Activated naive CD4-positive, alpha-beta T cell treated with anti-CD3 and anti-CD28 coated beads for 36 hours (primary cell): ENCODE measurements at regions of chr1 and their contacts with region 1.

Region 1: GRCh38 chr1:159891275-159892157 is 8.4 kb downstream of the CFAP45 start:
- DNase-seq: peak; percentile 87
- H3K4me3 Mint-ChIP-seq: no peak overlapping the region
- H3K27ac Mint-ChIP-seq: no peak overlapping the region
- H3K4me1 Mint-ChIP-seq: peaks cover 6% of the 10 kb centered on the region
- H3K27me3 Mint-ChIP-seq: no peaks in the 10 kb centered on the region

Region 2: GRCh38 chr1:159161001-159161718 is 730.4 kb before region 1 on chr1:
- CTCF ChIA-PET with region 1: no interaction called
- intact Hi-C with region 1: loop called (anchors 1 kb)
- DNase-seq: peak; percentile 80
- H3K4me3 Mint-ChIP-seq: no peak overlapping the region
- H3K27ac Mint-ChIP-seq: no peak overlapping the region
- H3K4me1 Mint-ChIP-seq: no peaks in the 10 kb centered on the region
- H3K27me3 Mint-ChIP-seq: peaks cover 43% of the 10 kb centered on the region

Region 3: DNA sequence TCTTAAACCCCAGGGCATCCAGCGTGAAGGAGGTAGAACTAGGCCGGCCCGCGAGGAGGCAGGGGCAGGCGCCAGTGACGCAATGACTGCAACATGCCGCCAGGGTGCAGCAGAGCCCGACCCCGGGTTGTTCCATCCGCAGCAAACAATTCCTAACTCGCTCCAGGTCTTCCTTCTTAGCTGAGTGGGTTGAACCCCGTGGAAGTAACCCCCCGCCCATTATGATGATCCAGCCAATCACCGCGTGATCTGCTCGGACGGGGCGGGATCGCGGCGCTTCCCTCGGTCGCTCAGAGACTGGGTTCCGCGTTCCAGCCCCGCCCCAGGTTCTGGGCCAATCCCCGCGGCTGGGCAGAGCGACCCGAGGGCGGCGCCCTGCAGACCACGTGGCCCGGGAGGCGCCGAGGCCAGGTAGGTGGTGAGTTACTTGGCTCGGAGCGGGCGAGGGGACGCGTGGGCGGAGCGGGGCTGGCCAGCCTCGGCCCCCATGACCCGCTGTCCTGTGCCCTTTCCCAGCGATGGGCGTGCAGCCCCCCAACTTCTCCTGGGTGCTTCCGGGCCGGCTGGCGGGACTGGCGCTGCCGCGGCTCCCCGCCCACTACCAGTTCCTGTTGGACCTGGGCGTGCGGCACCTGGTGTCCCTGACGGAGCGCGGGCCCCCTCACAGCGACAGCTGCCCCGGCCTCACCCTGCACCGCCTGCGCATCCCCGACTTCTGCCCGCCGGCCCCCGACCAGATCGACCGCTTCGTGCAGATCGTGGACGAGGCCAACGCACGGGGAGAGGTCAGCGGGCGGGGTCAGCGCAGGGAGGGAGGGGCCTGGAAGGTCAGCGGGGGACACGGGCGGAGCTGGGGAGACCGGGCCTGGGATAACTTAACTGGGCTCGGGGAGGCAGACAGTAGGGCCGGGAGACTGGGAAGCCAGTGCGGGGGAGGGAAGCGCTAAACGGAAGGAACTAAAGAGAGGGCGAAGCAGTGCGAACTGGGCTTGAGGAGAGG is 110.6 kb before region 1 on chr1 and contains the start of gene DUSP23:
- CTCF ChIA-PET with region 1: interaction called, 27 read pairs
- intact Hi-C with region 1: loop called (anchors 1 kb)
- DNase-seq: peak; percentile 96
- H3K4me3 Mint-ChIP-seq: peak within 1 kb of the TSS; percentile 73
- H3K27ac Mint-ChIP-seq: no peak within 1 kb of the TSS
- H3K4me1 Mint-ChIP-seq: peaks cover 7% of the 10 kb centered on the region
- H3K27me3 Mint-ChIP-seq: no peaks in the 10 kb centered on the region
- total RNA-seq, gene DUSP23: 13.0 to 14.1 TPM

Region 4: GRCh38 chr1:159798893-159799292 is 92.6 kb before region 1 on chr1:
- CTCF ChIA-PET with region 1: interaction called, 303 read pairs
- intact Hi-C with region 1: loop called (anchors 1 kb)
- DNase-seq: peak; percentile 71
- H3K4me3 Mint-ChIP-seq: no peak overlapping the region
- H3K27ac Mint-ChIP-seq: no peak overlapping the region
- H3K4me1 Mint-ChIP-seq: peaks cover 13% of the 10 kb centered on the region
- H3K27me3 Mint-ChIP-seq: no peaks in the 10 kb centered on the region

Region 5: GRCh38 chr1:159924981-159925712 is 33.6 kb after region 1 on chr1 and contains the start of gene TAGLN2:
- CTCF ChIA-PET with region 1: interaction called, 15 read pairs
- intact Hi-C with region 1: loop called (anchors 2 kb)
- DNase-seq: peak; percentile 89
- H3K4me3 Mint-ChIP-seq: peak within 1 kb of the TSS; percentile 91
- H3K27ac Mint-ChIP-seq: peak within 1 kb of the TSS; percentile 93
- H3K4me1 Mint-ChIP-seq: peaks cover 42% of the 10 kb centered on the region
- H3K27me3 Mint-ChIP-seq: no peaks in the 10 kb centered on the region
- total RNA-seq, gene TAGLN2: 453 to 454 TPM

Region 6: GRCh38 chr1:160244209-160244608 is 352.7 kb after region 1 on chr1:
- CTCF ChIA-PET with region 1: no interaction called
- intact Hi-C with region 1: no loop called
- DNase-seq: no peak
- H3K4me3 Mint-ChIP-seq: no peak overlapping the region
- H3K27ac Mint-ChIP-seq: no peak overlapping the region
- H3K4me1 Mint-ChIP-seq: peaks cover 12% of the 10 kb centered on the region
- H3K27me3 Mint-ChIP-seq: no peaks in the 10 kb centered on the region